ENCODE measurements at regions of chr1 and their contacts with region 1.

Region 1: GRCh38 chr1:204929487-204930154 is 59.0 kb downstream of the NFASC start:
- ATAC-seq: peak in 5 of 8 experiments; percentile 21 to 39 (median 34)
- H3K4me3 ChIP-seq: no peak overlapping the region
- H3K27ac ChIP-seq: peak overlapping the region; percentile 24 to 52
- H3K4me1 ChIP-seq: peaks cover 43 to 46% of the 10 kb centered on the region in 2 donors

Region 2: GRCh38 chr1:204819495-204819894 is 110.1 kb before region 1 on chr1:
- in situ Hi-C with region 1: loop called in 3 of 9 experiments (anchors 10 to 25 kb)
- ATAC-seq: peak in 5 of 8 experiments; percentile 81 to 98 (median 97)
- H3K4me3 ChIP-seq: no peak overlapping the region
- H3K27ac ChIP-seq: no peak overlapping the region
- H3K4me1 ChIP-seq: peaks cover 26 to 28% of the 10 kb centered on the region in 2 donors

Measured in motor neuron (in vitro differentiated cells).